Ascending aorta (tissue), 2 donors: ENCODE measurements at regions of chr15 and their contacts with region 1.

Region 1: GRCh38 chr15:50484781-50485180 is 60.6 kb downstream of the USP8 start:
- DNase-seq: no peak
- H3K4me3 ChIP-seq: no peak overlapping the region
- H3K27ac ChIP-seq: no peak overlapping the region
- H3K4me1 ChIP-seq: no peaks in the 10 kb centered on the region
- H3K27me3 ChIP-seq: no peaks in the 10 kb centered on the region
- CTCF ChIP-seq: no peak

Region 2: GRCh38 chr15:50633653-50634052 is 148.9 kb after region 1 on chr15:
- intact Hi-C with region 1: loop called (anchors 10 kb)
- DNase-seq: no peak
- H3K4me3 ChIP-seq: no peak overlapping the region
- H3K27ac ChIP-seq: no peak overlapping the region
- H3K4me1 ChIP-seq: no peaks in the 10 kb centered on the region
- H3K27me3 ChIP-seq: no peaks in the 10 kb centered on the region
- CTCF ChIP-seq: no peak